Caco-2 (cell line): ENCODE measurements at regions of chr1 and their contacts with region 1.

Region 1: GRCh38 chr1:200488375-200489165 is 78.7 kb upstream of the ZNF281 start:
- DNase-seq: peak; percentile 72 to 82
- H3K4me3 ChIP-seq: no peak overlapping the region
- H3K4me3 Mint-ChIP-seq: no peak overlapping the region
- H3K27ac Mint-ChIP-seq: peak overlapping the region; percentile 67
- H3K4me1 ChIP-seq: no peaks in the 10 kb centered on the region
- H3K4me1 Mint-ChIP-seq: peaks cover 18% of the 10 kb centered on the region
- H3K27me3 ChIP-seq: no peaks in the 10 kb centered on the region
- H3K27me3 Mint-ChIP-seq: no peaks in the 10 kb centered on the region
- CTCF ChIP-seq: peak; percentile 76 to 83

Region 2: DNA sequence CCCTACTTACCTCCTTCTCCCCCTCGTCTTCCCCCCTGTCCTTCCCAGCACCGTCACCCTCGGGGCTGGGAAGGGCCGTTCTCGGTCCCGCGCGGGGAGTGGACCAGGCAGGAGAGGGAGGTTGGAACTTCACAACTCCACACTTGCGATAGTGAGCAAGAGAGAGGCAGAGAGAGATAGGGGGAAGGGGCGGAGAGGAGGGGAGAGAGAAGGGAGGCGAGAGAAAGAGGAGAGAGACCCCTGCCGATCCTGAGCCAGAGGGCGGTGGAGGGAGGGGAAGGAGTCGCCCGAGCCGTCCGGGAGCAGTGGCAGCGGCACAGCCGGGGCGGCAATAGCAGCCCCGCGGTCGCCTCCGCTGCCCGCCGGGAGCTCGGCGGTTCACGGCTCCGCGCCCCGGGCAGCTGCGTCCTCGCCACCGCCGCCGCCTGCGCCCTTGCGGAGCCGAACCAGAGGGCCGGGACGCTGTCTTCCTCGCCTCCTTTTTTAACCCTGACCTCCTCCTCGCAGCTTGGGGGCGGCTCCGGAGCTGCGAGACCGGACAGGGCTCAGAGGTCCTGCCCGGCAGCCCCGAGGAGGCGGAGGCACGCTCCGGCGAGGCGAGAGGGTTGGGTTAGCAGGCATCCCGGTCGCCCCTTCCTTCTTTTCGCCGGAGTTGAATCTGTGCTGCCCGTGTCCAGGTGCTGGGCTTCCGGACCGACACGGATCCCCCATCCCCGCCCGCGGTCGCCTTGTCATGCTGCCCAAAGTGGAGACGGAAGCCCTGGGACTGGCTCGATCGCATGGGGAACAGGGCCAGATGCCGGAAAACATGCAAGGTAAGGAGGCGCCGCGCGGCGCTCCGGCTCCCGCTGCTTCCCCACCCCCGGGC is 449.4 kb before region 1 on chr1:
- CTCF ChIA-PET with region 1: no interaction called
- POLR2A ChIA-PET with region 1: no interaction called
- intact Hi-C with region 1: loop called (anchors 10 kb)
- DNase-seq: peak; percentile 54 to 55
- H3K4me3 ChIP-seq: peak overlapping the region; percentile 69
- H3K4me3 Mint-ChIP-seq: peak overlapping the region; percentile 95
- H3K27ac Mint-ChIP-seq: no peak overlapping the region
- H3K4me1 ChIP-seq: 0 out of 2 replicates have a peak, but pooled peaks cover 4% of the 10 kb centered on the region
- H3K4me1 Mint-ChIP-seq: peaks cover 13% of the 10 kb centered on the region
- H3K27me3 ChIP-seq: no peaks in the 10 kb centered on the region
- H3K27me3 Mint-ChIP-seq: no peaks in the 10 kb centered on the region
- CTCF ChIP-seq: no peak

Region 3: DNA sequence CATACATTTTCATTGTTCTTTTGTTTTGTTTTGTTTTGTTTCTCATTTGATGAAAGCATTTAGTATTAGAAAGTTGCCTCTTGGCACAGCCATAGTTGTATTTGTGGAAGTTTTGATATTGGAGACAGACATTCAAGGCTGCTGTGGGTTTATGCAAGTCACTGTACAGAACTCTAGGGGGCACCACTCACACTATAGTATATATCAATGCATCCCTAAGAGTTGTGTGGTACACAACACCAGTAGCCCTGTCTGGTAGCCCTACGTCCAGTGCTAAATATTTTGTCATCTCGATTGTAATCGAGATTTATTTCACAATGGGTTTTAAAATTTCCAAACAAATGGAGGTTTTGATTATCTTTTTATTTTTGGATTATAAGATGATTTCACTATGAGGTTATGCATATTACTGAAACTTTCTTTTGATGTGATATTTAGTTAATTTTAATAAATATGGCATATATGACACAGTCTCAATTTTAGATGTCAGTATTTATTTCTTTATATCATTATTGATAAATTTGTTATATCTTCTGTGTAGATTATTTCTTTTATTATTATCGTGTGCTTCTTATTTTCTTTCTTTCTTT is 348.8 kb before region 1 on chr1:
- CTCF ChIA-PET with region 1: no interaction called
- POLR2A ChIA-PET with region 1: no interaction called
- intact Hi-C with region 1: loop called (anchors 1 kb)
- DNase-seq: peak in 1 of 2 experiments; percentile 42
- H3K4me3 ChIP-seq: no peak overlapping the region
- H3K4me3 Mint-ChIP-seq: no peak overlapping the region
- H3K27ac Mint-ChIP-seq: no peak overlapping the region
- H3K4me1 ChIP-seq: no peaks in the 10 kb centered on the region
- H3K4me1 Mint-ChIP-seq: no peaks in the 10 kb centered on the region
- H3K27me3 ChIP-seq: no peaks in the 10 kb centered on the region
- H3K27me3 Mint-ChIP-seq: no peaks in the 10 kb centered on the region
- CTCF ChIP-seq: peak; percentile 41 to 54

Region 4: GRCh38 chr1:200306944-200307754 is 181.4 kb before region 1 on chr1:
- CTCF ChIA-PET with region 1: interaction called, 3 read pairs
- POLR2A ChIA-PET with region 1: no interaction called
- intact Hi-C with region 1: loop called (anchors 1 kb)
- DNase-seq: peak in 1 of 2 experiments; percentile 47
- H3K4me3 ChIP-seq: no peak overlapping the region
- H3K4me3 Mint-ChIP-seq: no peak overlapping the region
- H3K27ac Mint-ChIP-seq: no peak overlapping the region
- H3K4me1 ChIP-seq: no peaks in the 10 kb centered on the region
- H3K4me1 Mint-ChIP-seq: no peaks in the 10 kb centered on the region
- H3K27me3 ChIP-seq: no peaks in the 10 kb centered on the region
- H3K27me3 Mint-ChIP-seq: no peaks in the 10 kb centered on the region
- CTCF ChIP-seq: peak; percentile 77 to 83

Region 5: DNA sequence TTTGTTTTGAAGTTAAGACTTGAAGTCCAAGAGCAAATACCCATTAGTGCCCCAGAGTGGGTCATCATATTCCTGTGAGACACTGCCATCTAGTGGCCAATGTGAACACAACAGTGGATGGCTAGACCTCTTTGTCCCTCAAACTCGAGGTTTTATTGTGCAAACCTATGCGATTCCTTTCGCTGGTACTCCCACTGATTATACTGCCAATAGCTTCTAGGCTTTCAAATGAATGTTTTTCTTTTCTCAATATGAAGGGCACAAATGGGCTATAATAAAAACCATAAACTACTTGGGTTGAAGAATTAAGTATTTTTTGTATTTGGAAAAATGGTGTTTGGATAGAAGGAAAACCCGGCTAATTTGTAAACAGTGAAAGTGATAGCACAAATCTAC is 21.7 kb after region 1 on chr1:
- CTCF ChIA-PET with region 1: no interaction called
- POLR2A ChIA-PET with region 1: no interaction called
- intact Hi-C with region 1: loop called (anchors 2 kb)
- DNase-seq: peak; percentile 73 to 83
- H3K4me3 ChIP-seq: no peak overlapping the region
- H3K4me3 Mint-ChIP-seq: no peak overlapping the region
- H3K27ac Mint-ChIP-seq: no peak overlapping the region
- H3K4me1 ChIP-seq: 0 out of 2 replicates have a peak, but pooled peaks cover 5% of the 10 kb centered on the region
- H3K4me1 Mint-ChIP-seq: no peaks in the 10 kb centered on the region
- H3K27me3 ChIP-seq: no peaks in the 10 kb centered on the region
- H3K27me3 Mint-ChIP-seq: peaks cover 8% of the 10 kb centered on the region
- CTCF ChIP-seq: peak; percentile 83 to 87